Ascending aorta (tissue), 2 donors: ENCODE measurements at regions of chr14 and their contacts with region 1.

Region 1: GRCh38 chr14:20343092-20343861 is at the start of gene PARP2:
- DNase-seq: peak; percentile 90 to 99
- H3K4me3 ChIP-seq: peak within 1 kb of the TSS; percentile 60 to 77
- H3K27ac ChIP-seq: peak within 1 kb of the TSS; percentile 87 to 89
- H3K4me1 ChIP-seq: peaks cover 4 to 9% of the 10 kb centered on the region in 2 donors
- H3K27me3 ChIP-seq: no peaks in the 10 kb centered on the region
- CTCF ChIP-seq: no peak
- total RNA-seq, gene PARP2: 0.32 TPM

Region 2: GRCh38 chr14:20327005-20327869 is 16.0 kb before region 1 on chr14:
- intact Hi-C with region 1: loop called (anchors 2 kb)
- DNase-seq: no peak
- H3K4me3 ChIP-seq: no peak overlapping the region
- H3K27ac ChIP-seq: peak overlapping the region in 1 of 2 donors; percentile 19
- H3K4me1 ChIP-seq: peaks cover 0 to 8% of the 10 kb centered on the region in 2 donors
- H3K27me3 ChIP-seq: no peaks in the 10 kb centered on the region
- CTCF ChIP-seq: peak; percentile 56 to 78 (median 64)

Region 3: GRCh38 chr14:20332788-20333493 is 10.3 kb before region 1 on chr14 and contains the start of gene CCNB1IP1:
- intact Hi-C with region 1: loop called (anchors 1 kb)
- DNase-seq: peak; percentile 21 to 84
- H3K4me3 ChIP-seq: peak within 1 kb of the TSS; percentile 69 to 81
- H3K27ac ChIP-seq: peak within 1 kb of the TSS; percentile 87 to 94
- H3K4me1 ChIP-seq: peaks cover 0 to 11% of the 10 kb centered on the region in 2 donors
- H3K27me3 ChIP-seq: no peaks in the 10 kb centered on the region
- CTCF ChIP-seq: no peak
- total RNA-seq, gene CCNB1IP1: 12.6 TPM

Region 4: GRCh38 chr14:20413045-20413799 is 69.9 kb after region 1 on chr14 and contains the start of gene TEP1:
- intact Hi-C with region 1: loop called (anchors 1 kb)
- DNase-seq: peak; percentile 45 to 95
- H3K4me3 ChIP-seq: peak within 1 kb of the TSS; percentile 85 to 88
- H3K27ac ChIP-seq: peak within 1 kb of the TSS; percentile 97 to 98
- H3K4me1 ChIP-seq: peaks cover 0 to 5% of the 10 kb centered on the region in 2 donors
- H3K27me3 ChIP-seq: no peaks in the 10 kb centered on the region
- CTCF ChIP-seq: no peak
- total RNA-seq, gene TEP1: 43.7 TPM

Region 5: DNA sequence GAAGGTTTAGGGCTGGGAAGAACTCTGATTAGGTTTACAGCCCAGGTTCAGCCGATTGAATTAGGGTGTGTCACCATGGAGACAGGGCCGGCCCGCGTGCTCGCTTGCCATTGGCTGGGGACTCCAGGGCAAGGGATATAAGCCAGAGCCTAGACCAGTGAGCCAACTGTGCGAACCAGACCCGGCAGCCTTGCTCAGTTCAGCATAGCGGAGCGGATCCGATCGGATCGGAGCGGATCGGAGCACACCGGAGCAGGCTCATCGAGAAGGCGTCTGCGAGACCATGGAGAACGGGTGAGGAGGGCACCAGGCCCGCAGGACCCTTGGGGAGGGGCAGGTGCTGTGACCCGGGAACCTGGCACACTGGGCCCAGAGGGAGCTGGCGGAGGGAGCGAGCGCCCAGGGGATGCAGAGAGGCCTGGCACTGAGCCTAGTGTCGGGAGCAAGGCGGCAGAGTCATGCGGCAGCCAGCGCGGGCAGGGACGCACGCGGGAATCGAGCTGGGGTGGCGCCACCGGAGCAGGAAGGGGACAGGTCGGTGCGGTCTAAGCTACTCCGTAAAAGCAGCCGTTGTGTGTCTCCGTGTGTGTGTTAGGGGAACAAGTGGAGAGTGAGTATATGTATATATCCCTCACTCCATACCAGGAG is 126.1 kb after region 1 on chr14 and contains the start of gene PNP:
- intact Hi-C with region 1: loop called (anchors 1 kb)
- DNase-seq: peak; percentile 77 to 96
- H3K4me3 ChIP-seq: peak within 1 kb of the TSS; percentile 90 to 91
- H3K27ac ChIP-seq: peak within 1 kb of the TSS; percentile 94 to 96
- H3K4me1 ChIP-seq: peaks cover 0 to 12% of the 10 kb centered on the region in 2 donors
- H3K27me3 ChIP-seq: no peaks in the 10 kb centered on the region
- CTCF ChIP-seq: no peak
- total RNA-seq, gene PNP: 62.7 TPM

Region 6: GRCh38 chr14:21098076-21098891 is 755.0 kb after region 1 on chr14 and contains the start of gene ZNF219:
- intact Hi-C with region 1: loop called (anchors 5 kb)
- DNase-seq: peak in 1 of 2 donors; percentile 82
- H3K4me3 ChIP-seq: peak within 1 kb of the TSS; percentile 80 to 94
- H3K27ac ChIP-seq: peak within 1 kb of the TSS; percentile 92 to 96
- H3K4me1 ChIP-seq: peaks cover 3 to 10% of the 10 kb centered on the region in 2 donors
- H3K27me3 ChIP-seq: no peaks in the 10 kb centered on the region
- CTCF ChIP-seq: no peak
- total RNA-seq, gene ZNF219: 62.9 TPM

Region 7: DNA sequence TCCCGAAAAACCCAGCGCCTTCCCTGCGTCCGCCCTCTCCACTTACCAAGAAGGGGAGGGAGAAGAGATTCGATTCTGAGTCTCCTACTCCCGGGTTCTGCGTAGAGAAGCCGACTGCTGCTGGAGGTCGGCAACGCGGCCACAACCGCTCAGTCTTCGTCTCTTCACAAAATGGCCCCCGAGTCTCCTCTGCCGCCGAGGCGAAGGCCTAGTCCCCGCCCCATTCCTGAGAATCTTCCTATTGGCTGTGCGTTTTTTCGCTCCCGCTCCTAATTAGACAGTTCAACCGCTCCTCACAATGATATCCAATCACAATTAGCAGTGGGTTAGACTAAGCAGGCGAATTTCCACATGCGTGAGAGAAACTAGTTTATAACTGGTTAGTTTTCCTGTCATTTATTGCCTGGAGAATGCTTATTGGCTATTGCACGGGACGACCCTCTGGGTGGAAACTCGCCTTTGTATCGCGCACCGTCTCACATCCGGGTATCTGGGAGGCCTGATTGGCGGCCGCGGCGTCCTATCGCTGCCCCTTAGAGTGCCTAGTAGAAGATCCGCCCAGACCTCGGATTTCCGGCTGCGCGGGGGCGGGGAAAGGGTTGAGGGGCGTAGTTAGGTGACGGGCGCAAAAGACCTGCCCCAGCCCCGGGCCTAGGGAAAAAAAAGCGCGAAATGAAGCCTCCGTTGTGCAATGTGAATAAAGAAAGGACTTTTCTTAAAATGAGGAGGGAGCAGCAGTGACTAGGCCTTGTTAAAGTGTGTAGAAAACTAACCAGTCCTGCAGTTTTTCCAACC is 926.2 kb after region 1 on chr14 and contains the start of gene HNRNPC:
- intact Hi-C with region 1: loop called (anchors 1 kb)
- DNase-seq: peak; percentile 100
- H3K4me3 ChIP-seq: peak within 1 kb of the TSS; percentile 67 to 95
- H3K27ac ChIP-seq: peak within 1 kb of the TSS; percentile 96 to 98
- H3K4me1 ChIP-seq: peaks cover 13% of the 10 kb centered on the region in 2 donors
- H3K27me3 ChIP-seq: no peaks in the 10 kb centered on the region
- CTCF ChIP-seq: no peak
- total RNA-seq, gene HNRNPC: 303 TPM